GM10248 (cell line): ENCODE measurements at regions of chr1 and their contacts with region 1.

Region 1: DNA sequence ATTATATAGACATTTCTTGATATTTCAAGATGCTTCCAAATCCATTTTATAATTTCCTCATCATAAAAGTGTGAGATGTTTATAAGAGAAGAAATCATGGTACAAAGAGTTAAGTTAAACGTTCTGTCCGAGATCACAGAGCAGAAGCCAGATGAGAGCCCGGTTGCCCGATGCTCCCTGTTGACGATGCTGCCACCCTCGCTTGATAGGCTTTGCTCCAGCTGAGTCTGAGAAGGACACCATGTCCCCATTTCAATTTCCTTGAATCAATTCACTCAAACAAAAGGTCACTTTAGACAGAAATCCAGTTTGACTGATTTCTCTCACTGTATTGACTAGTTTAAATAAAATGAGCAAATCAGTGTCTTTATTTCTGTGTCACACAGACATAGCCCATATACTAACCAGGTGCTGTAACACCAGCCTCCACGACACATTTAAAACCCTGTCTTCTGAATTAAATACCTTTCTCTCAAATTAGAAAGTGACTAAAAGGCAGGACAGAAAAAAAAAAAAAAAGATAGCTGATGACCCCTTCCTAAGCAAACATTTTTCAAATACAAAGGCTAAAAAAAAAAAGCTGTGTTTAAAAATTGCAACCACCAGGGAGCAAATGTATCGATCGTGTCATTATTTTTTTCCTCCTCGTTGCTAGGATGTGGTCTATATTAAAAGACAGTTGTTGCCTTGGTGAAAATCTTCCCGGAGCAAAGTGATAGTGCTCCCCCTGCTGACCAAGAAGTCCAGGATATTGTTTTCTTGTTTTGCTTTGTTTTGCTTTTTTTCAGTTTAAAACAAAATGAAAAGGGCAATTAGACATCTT is 35.2 kb downstream of the DNASE2B start:
- DNase-seq: peak; percentile 49
- CTCF ChIP-seq: peak; percentile 70

Region 2: GRCh38 chr1:84143796-84144565 is 289.5 kb before region 1 on chr1 and contains the start of gene PRKACB:
- CTCF ChIA-PET with region 1: interaction called, 71 read pairs
- POLR2A ChIA-PET with region 1: no interaction called
- DNase-seq: peak; percentile 18
- CTCF ChIP-seq: no peak

Region 3: DNA sequence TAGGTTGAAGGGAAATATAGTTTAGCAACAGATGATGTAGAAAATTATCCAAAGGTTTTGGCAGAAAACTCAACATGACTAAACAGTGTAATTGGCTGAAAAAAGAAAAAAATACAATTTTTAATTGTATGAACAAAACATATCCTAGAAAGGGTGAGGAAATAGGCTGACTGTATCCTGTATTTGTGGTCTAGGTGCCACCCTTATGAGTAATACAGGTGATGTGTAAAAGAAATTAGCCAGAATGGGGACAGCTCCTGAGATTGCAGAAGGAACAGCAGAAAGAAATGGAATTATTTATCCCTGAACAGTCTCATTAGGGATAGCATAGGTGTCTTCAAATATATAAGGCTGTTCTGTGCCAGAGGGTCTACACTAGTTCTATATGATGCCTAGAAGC is 10.6 kb before region 1 on chr1:
- CTCF ChIA-PET with region 1: interaction called, 15 read pairs
- POLR2A ChIA-PET with region 1: no interaction called
- DNase-seq: no peak
- CTCF ChIP-seq: no peak